Activated T-helper 1 cell treated with anti-CD3 and anti-CD28 coated beads, Interleukin-12 subunit alpha, Interleukin-12 subunit beta, Interleukin-2, Interleukin-4 antibody, amounts not matched to agents 30 ng/mL and 10 ng/mL and 1 ng/mL, durations not matched to agents 14 hours and 24 hours and 36 hours (primary cell): ENCODE measurements at regions of chrX and their contacts with region 1.

Region 1: GRCh38 chrX:151753313-151754041 is 18.9 kb downstream of the CNGA2 start:
- DNase-seq: no peak
- H3K4me3 Mint-ChIP-seq: no peak overlapping the region
- H3K27ac Mint-ChIP-seq: no peak overlapping the region
- H3K4me1 Mint-ChIP-seq: no peaks in the 10 kb centered on the region
- H3K27me3 Mint-ChIP-seq: no peaks in the 10 kb centered on the region

Region 2: GRCh38 chrX:151871244-151871643 is 117.8 kb after region 1 on chrX:
- intact Hi-C with region 1: no loop called
- DNase-seq: no peak
- H3K4me3 Mint-ChIP-seq: no peak overlapping the region
- H3K27ac Mint-ChIP-seq: no peak overlapping the region
- H3K4me1 Mint-ChIP-seq: no peaks in the 10 kb centered on the region
- H3K27me3 Mint-ChIP-seq: no peaks in the 10 kb centered on the region

Region 3: GRCh38 chrX:151889421-151889820 is 135.9 kb after region 1 on chrX:
- intact Hi-C with region 1: no loop called
- DNase-seq: no peak
- H3K4me3 Mint-ChIP-seq: no peak overlapping the region
- H3K27ac Mint-ChIP-seq: no peak overlapping the region
- H3K4me1 Mint-ChIP-seq: no peaks in the 10 kb centered on the region
- H3K27me3 Mint-ChIP-seq: no peaks in the 10 kb centered on the region

Region 4: GRCh38 chrX:152632445-152633097 is 879.1 kb after region 1 on chrX:
- intact Hi-C with region 1: loop called (anchors 5 kb)
- DNase-seq: no peak
- H3K4me3 Mint-ChIP-seq: no peak overlapping the region
- H3K27ac Mint-ChIP-seq: no peak overlapping the region
- H3K4me1 Mint-ChIP-seq: no peaks in the 10 kb centered on the region
- H3K27me3 Mint-ChIP-seq: peaks cover 9% of the 10 kb centered on the region

Region 5: DNA sequence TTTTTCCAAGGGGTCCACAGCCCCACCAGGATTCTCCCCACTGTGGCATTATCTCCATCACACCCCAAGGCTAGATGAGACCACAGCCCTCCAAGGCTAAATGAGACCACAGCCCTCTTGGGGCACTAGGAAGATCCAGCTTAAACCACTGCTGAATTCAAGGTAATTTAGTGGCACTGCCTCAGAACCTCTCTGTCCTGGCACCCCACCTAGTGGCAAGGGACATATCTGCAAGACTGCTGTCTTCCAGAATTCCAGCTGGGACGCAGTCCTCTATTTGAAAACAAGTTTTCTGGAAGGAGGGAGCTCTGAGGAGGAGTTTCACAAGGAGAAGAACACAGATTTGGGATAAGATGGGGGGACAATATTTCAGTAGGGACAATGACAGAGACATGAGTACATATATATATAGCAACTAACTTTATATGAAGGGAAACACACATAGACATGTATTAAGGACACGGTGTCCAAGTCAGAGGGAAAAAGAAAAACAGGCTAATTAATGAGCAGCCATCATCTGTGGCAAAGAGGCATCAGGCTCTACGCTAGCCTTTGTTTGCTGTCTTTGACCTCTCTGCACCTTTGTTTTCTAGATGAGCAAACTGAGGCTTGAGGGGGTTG is 1067.8 kb after region 1 on chrX:
- intact Hi-C with region 1: loop called (anchors 5 kb)
- DNase-seq: no peak
- H3K4me3 Mint-ChIP-seq: no peak overlapping the region
- H3K27ac Mint-ChIP-seq: no peak overlapping the region
- H3K4me1 Mint-ChIP-seq: no peaks in the 10 kb centered on the region
- H3K27me3 Mint-ChIP-seq: no peaks in the 10 kb centered on the region